ENCODE measurements at regions of chr11 and their contacts with region 1.

Region 1: DNA sequence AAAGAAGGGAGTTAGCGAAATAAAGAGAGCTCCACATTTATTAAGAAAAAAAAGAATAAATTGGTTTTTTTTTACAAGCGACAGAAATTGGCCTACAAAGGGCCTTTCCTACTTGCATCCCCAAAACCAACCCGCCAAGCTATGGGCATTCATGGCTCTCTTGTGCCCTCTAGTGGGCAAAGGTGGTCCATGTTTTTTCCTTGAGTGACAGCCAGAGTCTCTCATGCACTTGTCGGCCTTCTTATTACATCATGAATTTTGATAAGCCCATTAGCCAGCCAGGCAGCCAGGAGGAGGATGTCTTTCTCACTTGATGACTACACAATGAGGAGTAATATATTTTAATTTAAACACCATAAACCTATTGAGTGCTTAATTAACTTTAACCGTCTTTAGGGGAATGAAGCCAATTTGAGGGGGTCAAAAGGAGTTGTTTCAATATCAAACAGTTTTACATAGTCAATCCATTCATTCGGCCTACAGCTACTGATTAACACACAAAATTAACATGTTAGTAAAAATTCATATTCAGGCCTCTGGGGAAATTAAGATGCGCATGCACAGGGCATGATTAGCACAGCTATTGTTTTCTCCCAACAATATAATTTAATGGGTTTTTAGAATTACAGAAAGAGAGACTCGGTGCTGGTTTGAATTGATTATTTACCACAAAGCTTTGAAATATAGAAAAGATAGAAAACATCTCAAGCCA is 85.5 kb downstream of the RCN1 start:
- DNase-seq: peak; percentile 76
- H3K4me3 ChIP-seq: no peak overlapping the region
- H3K27ac ChIP-seq: no peak overlapping the region
- H3K4me1 ChIP-seq: no peaks in the 10 kb centered on the region
- H3K27me3 ChIP-seq: no peaks in the 10 kb centered on the region
- CTCF ChIP-seq: peak; percentile 70 to 78 (median 77)
- POLR2A ChIP-seq: no peak

Region 2: DNA sequence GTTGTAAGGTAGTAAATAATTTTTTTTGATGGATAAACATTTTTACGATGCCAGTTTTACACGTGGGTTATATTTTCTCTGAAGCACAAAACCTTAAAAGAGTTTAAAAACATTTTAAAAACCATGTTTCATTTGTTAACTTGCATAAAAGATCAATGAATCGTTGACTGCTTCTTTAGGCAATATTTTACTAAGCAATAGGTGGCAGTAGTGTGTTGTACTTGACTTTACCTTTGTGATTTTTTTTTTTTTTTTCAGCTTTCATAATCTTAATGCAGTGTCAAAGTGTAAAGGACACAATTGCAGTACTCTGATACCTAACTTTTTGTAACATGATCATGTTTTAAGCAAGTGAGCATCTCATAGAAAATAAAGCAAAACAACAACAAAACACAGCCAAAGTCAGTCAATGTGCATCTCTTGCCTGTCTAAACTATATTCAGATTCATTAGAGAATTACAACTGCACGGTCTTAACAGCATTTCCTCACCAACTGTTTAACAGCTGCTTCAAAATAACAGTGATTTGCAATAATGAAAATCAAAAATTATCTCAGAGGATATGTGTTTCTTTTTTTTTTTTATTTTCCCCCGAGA is 779.0 kb before region 1 on chr11:
- intact Hi-C with region 1: loop called (anchors 10 kb)
- DNase-seq: no peak
- H3K4me3 ChIP-seq: no peak overlapping the region
- H3K27ac ChIP-seq: no peak overlapping the region
- H3K4me1 ChIP-seq: no peaks in the 10 kb centered on the region
- H3K27me3 ChIP-seq: no peaks in the 10 kb centered on the region
- CTCF ChIP-seq: peak in 3 of 4 experiments; percentile 34 to 47 (median 39)
- POLR2A ChIP-seq: no peak

Region 3: GRCh38 chr11:32006799-32007388 is 169.5 kb before region 1 on chr11:
- intact Hi-C with region 1: no loop called
- DNase-seq: no peak
- H3K4me3 ChIP-seq: no peak overlapping the region
- H3K27ac ChIP-seq: no peak overlapping the region
- H3K4me1 ChIP-seq: no peaks in the 10 kb centered on the region
- H3K27me3 ChIP-seq: peaks cover 7% of the 10 kb centered on the region
- CTCF ChIP-seq: peak in 2 of 4 experiments; percentile 26 to 35
- POLR2A ChIP-seq: no peak

Region 4: GRCh38 chr11:32052218-32052617 is 124.2 kb before region 1 on chr11:
- intact Hi-C with region 1: loop called (anchors 2 kb)
- DNase-seq: peak; percentile 48
- H3K4me3 ChIP-seq: no peak overlapping the region
- H3K27ac ChIP-seq: no peak overlapping the region
- H3K4me1 ChIP-seq: no peaks in the 10 kb centered on the region
- H3K27me3 ChIP-seq: no peaks in the 10 kb centered on the region
- CTCF ChIP-seq: peak; percentile 69 to 93 (median 76)
- POLR2A ChIP-seq: no peak

Measured in prostate gland (tissue), 2 donors.